ENCODE measurements at regions of chr13 and their contacts with region 1.

Region 1: GRCh38 chr13:96299236-96299635 is 209.3 kb downstream of the HS6ST3 start:
- DNase-seq: peak in 1 of 2 experiments; percentile 6
- H3K4me3 ChIP-seq: no peak overlapping the region
- H3K4me3 Mint-ChIP-seq: no peak overlapping the region
- H3K27ac Mint-ChIP-seq: no peak overlapping the region
- H3K4me1 ChIP-seq: no peaks in the 10 kb centered on the region
- H3K4me1 Mint-ChIP-seq: no peaks in the 10 kb centered on the region
- H3K27me3 ChIP-seq: no peaks in the 10 kb centered on the region
- H3K27me3 Mint-ChIP-seq: peaks cover 8% of the 10 kb centered on the region
- CTCF ChIP-seq: peak in 1 of 2 experiments; percentile 10

Region 2: DNA sequence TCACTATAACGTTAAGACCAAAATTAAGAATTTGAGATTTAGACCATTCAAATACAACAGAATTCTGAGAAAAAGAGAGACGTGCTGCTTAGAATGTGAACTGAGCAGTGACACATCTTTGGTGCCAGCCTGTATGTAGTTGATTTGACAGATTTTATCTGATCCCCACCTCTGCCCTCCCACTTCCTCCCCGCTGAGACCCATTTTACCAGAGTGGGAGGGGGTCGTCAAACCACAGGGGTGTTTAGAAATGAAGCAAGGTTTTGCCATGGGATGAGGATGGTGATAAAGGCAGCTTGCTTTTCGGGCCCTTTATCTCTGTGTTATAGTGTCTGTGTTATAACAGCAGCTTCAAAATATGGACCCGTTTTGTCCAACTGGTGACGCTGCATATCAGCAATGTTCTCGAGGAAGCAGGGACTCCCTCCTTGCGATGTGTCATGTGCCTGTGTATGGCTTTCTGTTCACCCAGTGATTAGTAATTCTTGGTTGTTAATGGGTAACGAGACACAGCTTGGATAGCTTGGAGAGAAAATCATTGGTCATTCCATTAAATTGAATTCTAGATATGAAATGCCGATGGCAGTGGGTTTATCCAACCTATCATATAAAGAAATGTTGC is 84.3 kb before region 1 on chr13:
- CTCF ChIA-PET with region 1: no interaction called
- POLR2A ChIA-PET with region 1: no interaction called
- intact Hi-C with region 1: no loop called
- DNase-seq: no peak
- H3K4me3 ChIP-seq: no peak overlapping the region
- H3K4me3 Mint-ChIP-seq: no peak overlapping the region
- H3K27ac Mint-ChIP-seq: no peak overlapping the region
- H3K4me1 ChIP-seq: no peaks in the 10 kb centered on the region
- H3K4me1 Mint-ChIP-seq: no peaks in the 10 kb centered on the region
- H3K27me3 ChIP-seq: no peaks in the 10 kb centered on the region
- H3K27me3 Mint-ChIP-seq: peaks cover 10% of the 10 kb centered on the region
- CTCF ChIP-seq: no peak

Region 3: DNA sequence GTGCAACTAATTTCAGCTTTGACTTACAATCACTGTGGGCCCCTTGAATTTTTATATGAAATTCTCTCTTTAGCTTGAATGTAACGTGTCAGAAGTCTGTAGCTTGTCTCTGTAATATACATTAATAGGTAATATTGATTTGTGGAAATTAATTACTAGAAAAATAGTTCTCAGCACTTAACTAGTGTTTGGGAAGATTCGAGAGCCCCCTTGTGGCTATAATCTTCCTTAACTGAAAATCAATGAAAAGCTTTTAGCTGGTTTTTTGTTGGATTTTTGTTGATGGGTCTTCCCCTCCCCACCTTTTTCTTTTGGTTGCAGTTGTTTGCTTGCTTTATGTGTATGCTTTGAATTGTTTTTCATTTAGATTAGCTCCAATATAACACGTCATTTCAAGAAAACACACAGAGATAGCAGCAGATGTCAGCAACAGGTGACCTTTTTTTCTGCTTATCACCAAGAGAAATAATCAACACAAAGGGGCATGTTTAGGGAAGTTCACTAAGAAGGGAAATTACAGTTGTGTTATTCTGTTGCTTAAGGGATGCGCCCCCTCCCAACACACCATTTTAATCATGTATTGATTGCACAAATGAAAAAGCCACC is 518.2 kb after region 1 on chr13:
- CTCF ChIA-PET with region 1: no interaction called
- POLR2A ChIA-PET with region 1: no interaction called
- intact Hi-C with region 1: loop called (anchors 1 kb)
- DNase-seq: peak in 1 of 2 experiments; percentile 28
- H3K4me3 ChIP-seq: no peak overlapping the region
- H3K4me3 Mint-ChIP-seq: no peak overlapping the region
- H3K27ac Mint-ChIP-seq: no peak overlapping the region
- H3K4me1 ChIP-seq: no peaks in the 10 kb centered on the region
- H3K4me1 Mint-ChIP-seq: no peaks in the 10 kb centered on the region
- H3K27me3 ChIP-seq: no peaks in the 10 kb centered on the region
- H3K27me3 Mint-ChIP-seq: peaks cover under 1% of the 10 kb centered on the region
- CTCF ChIP-seq: peak; percentile 56 to 64

Measured in Caco-2 (cell line).